Activated naive CD4-positive, alpha-beta T cell treated with anti-CD3 and anti-CD28 coated beads, Interleukin-2, amount 10 ng/mL, durations not matched to agents 7 days and 5 days (primary cell): ENCODE measurements at regions of chr11 and their contacts with region 1.

Region 1: DNA sequence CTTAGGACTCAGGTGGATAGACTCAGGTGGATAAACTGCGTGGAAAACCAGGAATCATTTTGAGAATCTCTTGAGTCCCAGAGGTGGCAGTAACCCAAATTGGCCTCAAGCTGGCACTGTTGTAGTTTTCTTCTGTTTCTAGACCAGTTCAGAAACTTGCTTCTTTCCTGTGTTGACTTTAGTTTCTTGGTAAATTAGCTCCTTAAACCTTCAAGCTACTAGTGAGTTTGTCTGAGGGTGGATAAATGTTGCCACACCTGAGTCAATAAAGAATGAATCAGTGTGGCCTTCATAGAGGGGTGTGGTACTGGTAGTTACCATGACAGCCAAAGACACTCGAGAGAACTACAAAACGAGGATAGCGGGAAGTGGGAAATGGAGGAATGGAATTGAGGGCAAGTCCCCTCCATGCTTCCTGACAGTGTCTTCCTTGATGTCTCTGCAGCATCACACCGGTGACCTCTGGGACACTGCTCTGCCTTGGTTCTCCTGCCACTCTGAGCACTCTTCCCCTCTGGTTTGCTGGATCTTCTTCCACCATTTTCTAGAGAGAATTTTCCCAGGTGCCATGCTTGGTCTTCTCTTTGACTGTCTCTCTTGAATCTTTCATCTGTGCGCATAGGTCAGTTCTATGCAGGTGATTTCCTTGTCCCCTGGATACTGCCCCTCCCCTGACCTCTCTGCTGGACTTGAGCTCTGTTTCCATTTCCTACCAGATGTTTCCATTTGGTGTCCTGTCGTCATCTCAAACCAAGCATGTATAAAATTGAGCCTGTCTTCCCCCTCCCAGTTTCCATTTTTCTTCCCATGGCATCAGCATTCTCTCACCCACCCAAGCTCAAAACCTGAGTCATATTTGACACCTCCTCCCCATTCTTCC is 7.2 kb downstream of the POLD4 start:
- DNase-seq: peak; percentile 52
- H3K4me3 Mint-ChIP-seq: no peak overlapping the region
- H3K27ac Mint-ChIP-seq: peak overlapping the region; percentile 92
- H3K4me1 Mint-ChIP-seq: peaks cover 38% of the 10 kb centered on the region
- H3K27me3 Mint-ChIP-seq: no peaks in the 10 kb centered on the region

Region 2: GRCh38 chr11:67265633-67266423 is 80.3 kb before region 1 on chr11:
- CTCF ChIA-PET with region 1: interaction called, 10 read pairs
- DNase-seq: peak; percentile 79
- H3K4me3 Mint-ChIP-seq: peak overlapping the region; percentile 75
- H3K27ac Mint-ChIP-seq: peak overlapping the region; percentile 79
- H3K4me1 Mint-ChIP-seq: peaks cover 67% of the 10 kb centered on the region
- H3K27me3 Mint-ChIP-seq: peaks cover 10% of the 10 kb centered on the region

Region 3: DNA sequence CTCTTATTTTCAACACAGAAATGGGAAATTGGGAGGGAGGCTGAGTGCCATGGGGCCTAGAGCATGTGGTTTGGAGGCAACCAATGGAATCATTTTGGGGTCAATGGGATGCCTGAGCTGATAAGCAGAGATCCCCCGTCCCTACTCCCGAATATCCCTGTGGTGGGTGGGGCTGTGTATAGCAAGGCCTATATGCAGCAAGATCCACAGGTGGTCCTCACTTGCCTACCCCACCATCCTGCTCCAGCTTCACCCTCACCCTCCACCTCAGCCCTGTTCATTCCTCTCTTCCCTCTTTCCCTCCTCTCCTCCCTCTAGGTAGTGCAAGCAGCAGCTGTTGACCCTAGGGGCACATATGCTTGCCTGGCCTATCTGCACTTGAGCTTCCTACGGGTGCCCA is 23.4 kb before region 1 on chr11:
- CTCF ChIA-PET with region 1: interaction called, 13 read pairs
- DNase-seq: no peak
- H3K4me3 Mint-ChIP-seq: no peak overlapping the region
- H3K27ac Mint-ChIP-seq: peak overlapping the region; percentile 56
- H3K4me1 Mint-ChIP-seq: peaks cover 9% of the 10 kb centered on the region
- H3K27me3 Mint-ChIP-seq: peaks cover 15% of the 10 kb centered on the region

Region 4: DNA sequence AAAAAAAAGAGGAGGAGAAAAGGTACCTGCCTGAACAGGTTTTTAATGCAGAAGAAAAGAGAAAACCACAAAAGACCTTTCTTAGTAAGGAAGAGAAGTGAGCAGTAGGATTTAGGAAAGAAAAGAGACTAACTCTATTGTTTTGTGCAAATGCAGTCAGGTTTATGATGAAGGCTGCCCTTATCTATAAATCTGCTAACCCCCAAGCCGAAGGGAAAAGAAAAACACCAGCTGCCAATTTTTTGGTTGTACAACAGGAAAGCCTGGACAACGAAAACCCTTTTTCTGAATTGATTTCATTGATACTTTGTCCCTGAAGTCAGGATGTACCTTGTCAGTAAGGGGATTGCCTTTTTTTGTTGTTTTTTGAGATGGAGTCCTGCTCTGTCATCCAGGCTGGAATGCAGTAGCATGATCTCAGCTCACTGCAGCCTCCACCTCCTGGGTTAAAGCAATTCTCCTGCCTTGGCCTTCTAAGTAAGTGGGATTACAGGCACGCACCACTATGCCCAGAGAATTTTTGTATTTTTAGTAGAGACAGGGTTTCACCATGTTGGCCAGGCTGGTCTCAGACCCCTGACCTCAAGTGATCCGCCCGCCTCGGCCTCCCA is 14.0 kb before region 1 on chr11:
- CTCF ChIA-PET with region 1: interaction called, 23 read pairs
- DNase-seq: no peak
- H3K4me3 Mint-ChIP-seq: no peak overlapping the region
- H3K27ac Mint-ChIP-seq: no peak overlapping the region
- H3K4me1 Mint-ChIP-seq: no peaks in the 10 kb centered on the region
- H3K27me3 Mint-ChIP-seq: no peaks in the 10 kb centered on the region

Region 5: GRCh38 chr11:67364783-67365722 is 18.9 kb after region 1 on chr11:
- CTCF ChIA-PET with region 1: interaction called, 564 read pairs
- DNase-seq: no peak
- H3K4me3 Mint-ChIP-seq: no peak overlapping the region
- H3K27ac Mint-ChIP-seq: no peak overlapping the region
- H3K4me1 Mint-ChIP-seq: peaks cover 23% of the 10 kb centered on the region
- H3K27me3 Mint-ChIP-seq: peaks cover 77% of the 10 kb centered on the region

Region 6: DNA sequence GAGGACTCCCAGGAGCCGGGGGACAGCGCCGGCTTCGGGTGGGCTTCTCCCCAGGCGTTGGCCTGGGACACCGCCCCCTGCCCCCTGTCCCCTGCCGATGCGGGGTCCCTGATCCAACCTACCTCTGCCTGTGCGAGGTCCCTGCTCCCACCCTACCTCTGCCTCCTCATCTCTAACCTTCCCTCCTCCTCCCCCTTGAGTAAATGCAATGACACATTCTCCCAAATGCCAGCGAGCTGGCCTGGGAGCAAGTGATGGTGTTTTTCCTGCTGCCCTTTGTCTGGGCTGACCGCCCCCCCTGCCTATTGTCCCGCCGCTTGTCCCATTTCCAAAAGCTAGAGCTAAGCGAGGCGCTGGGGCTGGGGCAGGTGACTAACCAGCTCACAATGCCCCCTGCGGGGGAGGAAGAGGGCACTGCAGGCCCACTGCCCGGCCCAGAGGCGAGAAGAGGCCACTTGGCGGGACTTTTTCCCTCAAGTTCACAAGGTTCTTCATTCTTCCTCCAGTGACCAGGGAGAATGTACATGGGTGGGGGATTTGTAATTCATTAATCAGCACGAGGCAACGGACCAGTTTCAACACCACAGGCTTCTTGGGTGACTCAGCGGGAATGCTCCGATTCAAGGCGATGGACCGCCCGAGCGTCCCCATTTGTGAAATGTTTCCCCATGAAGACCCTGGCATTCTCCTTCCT is 27.9 kb after region 1 on chr11:
- CTCF ChIA-PET with region 1: interaction called, 564 read pairs
- DNase-seq: peak; percentile 71
- H3K4me3 Mint-ChIP-seq: peak overlapping the region; percentile 67
- H3K27ac Mint-ChIP-seq: no peak overlapping the region
- H3K4me1 Mint-ChIP-seq: peaks cover 33% of the 10 kb centered on the region
- H3K27me3 Mint-ChIP-seq: peaks cover 96% of the 10 kb centered on the region

Region 7: GRCh38 chr11:67382276-67383136 is 36.3 kb after region 1 on chr11:
- CTCF ChIA-PET with region 1: interaction called, 564 read pairs
- DNase-seq: peak; percentile 90
- H3K4me3 Mint-ChIP-seq: no peak overlapping the region
- H3K27ac Mint-ChIP-seq: no peak overlapping the region
- H3K4me1 Mint-ChIP-seq: peaks cover 3% of the 10 kb centered on the region
- H3K27me3 Mint-ChIP-seq: peaks cover 81% of the 10 kb centered on the region

Region 8: DNA sequence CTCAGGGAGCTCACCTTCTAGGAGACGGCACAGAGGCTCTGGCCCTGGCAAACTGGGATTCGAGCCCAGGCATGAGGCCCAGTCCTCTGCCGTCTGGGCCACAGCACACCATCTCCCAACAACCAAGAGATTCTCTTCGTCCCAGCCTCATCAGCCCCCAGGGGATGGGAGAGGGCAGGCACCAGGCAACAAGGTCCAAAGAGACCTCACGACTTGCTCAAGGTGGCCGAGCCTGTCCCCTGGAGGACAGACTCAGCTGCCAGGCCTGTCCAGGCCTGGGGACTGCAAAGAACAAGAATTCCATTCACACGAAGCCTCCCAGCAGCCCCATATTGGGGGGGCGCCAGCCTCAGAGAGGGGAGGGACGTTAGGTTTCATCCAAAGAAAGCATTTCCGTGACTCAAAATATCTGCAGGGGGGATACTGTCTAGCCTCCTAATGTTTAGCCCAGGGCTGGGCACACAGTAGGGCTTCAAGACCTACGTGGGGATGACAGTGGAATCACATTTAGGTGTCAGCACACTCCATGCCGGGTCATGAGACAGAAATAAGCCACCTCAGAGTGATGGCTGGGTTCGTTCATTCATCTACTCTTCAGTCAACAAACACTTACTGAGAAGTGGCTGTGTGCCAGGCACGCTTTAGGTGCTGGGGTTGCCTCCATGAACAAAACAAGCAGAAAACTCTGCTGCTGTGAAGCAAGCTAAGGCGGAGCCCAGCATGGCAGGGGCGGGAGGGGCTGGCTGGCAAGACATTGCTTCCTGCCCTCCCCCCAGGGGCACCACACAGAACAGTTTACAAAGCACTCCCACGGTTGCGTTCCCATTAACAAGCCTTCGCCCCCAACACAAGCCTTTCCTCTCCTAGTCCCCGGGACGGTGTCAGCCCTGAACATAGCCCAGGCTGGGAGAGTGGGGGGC is 70.5 kb after region 1 on chr11:
- CTCF ChIA-PET with region 1: no interaction called
- DNase-seq: peak; percentile 75
- H3K4me3 Mint-ChIP-seq: peak overlapping the region; percentile 58
- H3K27ac Mint-ChIP-seq: peak overlapping the region; percentile 88
- H3K4me1 Mint-ChIP-seq: peaks cover 77% of the 10 kb centered on the region
- H3K27me3 Mint-ChIP-seq: peaks cover 57% of the 10 kb centered on the region